Caco-2 (cell line): ENCODE measurements at regions of chr9 and their contacts with region 1.

Region 1: GRCh38 chr9:4837261-4838188 is 44.8 kb downstream of the RCL1 start:
- DNase-seq: no peak
- H3K4me3 ChIP-seq: no peak overlapping the region
- H3K4me3 Mint-ChIP-seq: no peak overlapping the region
- H3K27ac Mint-ChIP-seq: no peak overlapping the region
- H3K4me1 ChIP-seq: peaks cover 22% of the 10 kb centered on the region
- H3K4me1 Mint-ChIP-seq: peaks cover 33% of the 10 kb centered on the region
- H3K27me3 ChIP-seq: no peaks in the 10 kb centered on the region
- H3K27me3 Mint-ChIP-seq: no peaks in the 10 kb centered on the region
- CTCF ChIP-seq: no peak

Region 2: DNA sequence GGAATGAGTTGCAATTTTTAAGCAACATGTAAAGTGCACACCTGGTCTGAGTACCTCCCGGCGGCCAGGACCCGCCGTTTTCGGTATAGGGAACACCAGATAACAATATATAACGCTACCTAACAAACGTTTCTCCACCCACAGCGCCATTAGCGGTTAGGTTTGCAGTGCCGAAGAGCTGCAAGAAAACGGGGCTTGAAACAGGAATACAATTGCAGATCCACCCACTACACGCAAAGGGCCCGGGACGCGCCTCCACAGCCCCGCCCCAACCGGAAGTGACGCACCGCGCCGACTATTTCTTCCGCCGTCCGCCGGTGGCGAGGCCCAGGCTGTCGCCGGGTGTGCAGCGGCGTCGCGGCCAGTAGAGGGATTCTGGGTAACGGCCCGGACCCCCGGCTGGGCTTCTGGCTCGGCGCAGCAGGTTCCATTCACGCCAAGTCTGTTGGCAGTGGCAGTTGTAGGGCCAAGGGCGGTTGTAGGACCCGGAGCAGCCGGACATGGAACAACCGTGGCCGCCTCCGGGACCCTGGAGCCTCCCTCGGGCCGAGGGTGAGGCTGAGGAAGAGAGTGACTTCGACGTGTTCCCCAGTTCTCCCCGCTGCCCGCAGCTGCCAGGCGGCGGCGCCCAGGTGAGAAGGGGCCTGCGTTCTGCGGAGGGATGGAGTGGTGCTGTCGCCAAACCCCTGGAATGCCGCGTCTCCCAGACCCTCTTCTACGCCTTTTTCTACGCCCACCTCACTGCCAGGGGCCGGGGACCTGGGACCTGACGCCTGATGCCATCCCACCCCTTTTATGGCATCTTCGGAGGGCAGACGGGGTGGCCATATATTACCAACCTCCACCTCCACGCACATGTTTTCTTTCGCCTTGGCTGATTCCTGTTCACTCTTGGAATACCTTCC is 158.0 kb before region 1 on chr9 and contains the start of gene CDC37L1:
- CTCF ChIA-PET with region 1: no interaction called
- POLR2A ChIA-PET with region 1: no interaction called
- intact Hi-C with region 1: no loop called
- DNase-seq: peak; percentile 95 to 96
- H3K4me3 ChIP-seq: peak within 1 kb of the TSS; percentile 89
- H3K4me3 Mint-ChIP-seq: no peak within 1 kb of the TSS
- H3K27ac Mint-ChIP-seq: no peak within 1 kb of the TSS
- H3K4me1 ChIP-seq: peaks cover 12% of the 10 kb centered on the region
- H3K4me1 Mint-ChIP-seq: no peaks in the 10 kb centered on the region
- H3K27me3 ChIP-seq: no peaks in the 10 kb centered on the region
- H3K27me3 Mint-ChIP-seq: no peaks in the 10 kb centered on the region
- CTCF ChIP-seq: peak; percentile 47 to 51
- total RNA-seq, gene CDC37L1: 8.7 and 9.3 TPM in 2 replicates

Region 3: GRCh38 chr9:4792572-4793458 is 44.7 kb before region 1 on chr9 and contains the start of gene RCL1:
- CTCF ChIA-PET with region 1: no interaction called
- POLR2A ChIA-PET with region 1: no interaction called
- intact Hi-C with region 1: loop called (anchors 2 kb)
- DNase-seq: peak; percentile 92 to 96
- H3K4me3 ChIP-seq: peak within 1 kb of the TSS; percentile 91
- H3K4me3 Mint-ChIP-seq: peak within 1 kb of the TSS; percentile 98
- H3K27ac Mint-ChIP-seq: peak within 1 kb of the TSS; percentile 91
- H3K4me1 ChIP-seq: no peaks in the 10 kb centered on the region
- H3K4me1 Mint-ChIP-seq: peaks cover 6% of the 10 kb centered on the region
- H3K27me3 ChIP-seq: no peaks in the 10 kb centered on the region
- H3K27me3 Mint-ChIP-seq: peaks cover 2% of the 10 kb centered on the region
- CTCF ChIP-seq: no peak
- total RNA-seq, gene RCL1: 15.1 and 15.7 TPM in 2 replicates

Region 4: GRCh38 chr9:4984621-4985385 is 147.3 kb after region 1 on chr9 and contains the start of gene JAK2:
- CTCF ChIA-PET with region 1: no interaction called
- POLR2A ChIA-PET with region 1: no interaction called
- intact Hi-C with region 1: loop called (anchors 5 kb)
- DNase-seq: peak; percentile 89 to 90
- H3K4me3 ChIP-seq: peak within 1 kb of the TSS; percentile 63
- H3K4me3 Mint-ChIP-seq: peak within 1 kb of the TSS; percentile 76
- H3K27ac Mint-ChIP-seq: peak within 1 kb of the TSS; percentile 87
- H3K4me1 ChIP-seq: peaks cover 3% of the 10 kb centered on the region; the same call in 1 of the 2 replicates
- H3K4me1 Mint-ChIP-seq: peaks cover 15% of the 10 kb centered on the region
- H3K27me3 ChIP-seq: no peaks in the 10 kb centered on the region
- H3K27me3 Mint-ChIP-seq: peaks cover 5% of the 10 kb centered on the region
- CTCF ChIP-seq: peak; percentile 18 to 28
- total RNA-seq, gene JAK2: 0.86 and 1.4 TPM in 2 replicates